AG04450 (cell line): ENCODE measurements at regions of chr12 and their contacts with region 1.

Region 1: GRCh38 chr12:7142056-7142644 is 12.0 kb downstream of the CLSTN3 start:
- DNase-seq: no peak
- H3K4me3 ChIP-seq: no peak overlapping the region
- H3K27ac ChIP-seq: no peak overlapping the region
- H3K27me3 ChIP-seq: no peaks in the 10 kb centered on the region
- CTCF ChIP-seq: peak; percentile 77

Region 2: GRCh38 chr12:7108796-7109571 is 33.2 kb before region 1 on chr12 and contains the start of gene C1RL:
- CTCF ChIA-PET with region 1: interaction called, 12 read pairs
- POLR2A ChIA-PET with region 1: no interaction called
- DNase-seq: no peak
- H3K4me3 ChIP-seq: peak within 1 kb of the TSS; percentile 82
- H3K27ac ChIP-seq: peak within 1 kb of the TSS; percentile 96
- H3K27me3 ChIP-seq: no peaks in the 10 kb centered on the region
- CTCF ChIP-seq: peak; percentile 97
- polyA plus RNA-seq, gene C1RL: 45.3 and 58.7 TPM in 2 replicates

Region 3: DNA sequence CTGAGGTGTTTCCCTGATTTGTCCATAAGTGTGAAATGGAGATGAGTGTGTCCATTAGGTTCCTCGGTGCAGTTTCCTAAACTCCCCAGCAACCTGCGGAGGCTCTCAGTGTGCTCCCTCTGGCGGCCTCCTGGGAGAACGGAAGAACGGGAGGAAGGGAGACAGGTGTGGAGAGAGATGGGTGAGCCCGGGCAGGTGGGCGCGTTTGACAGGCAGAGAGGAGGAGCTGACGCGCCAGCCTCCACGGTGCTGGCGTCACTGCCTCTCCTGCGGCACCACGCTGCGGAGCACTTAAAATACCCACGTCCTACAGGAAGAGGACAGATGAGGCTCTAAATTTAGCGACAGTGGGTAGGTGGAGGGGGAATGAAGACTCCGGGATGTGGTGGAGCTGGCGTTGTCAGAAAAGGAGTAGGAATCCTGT is 20.6 kb after region 1 on chr12:
- CTCF ChIA-PET with region 1: interaction called, 45 read pairs
- POLR2A ChIA-PET with region 1: no interaction called
- DNase-seq: no peak
- H3K4me3 ChIP-seq: no peak overlapping the region
- H3K27ac ChIP-seq: no peak overlapping the region
- H3K27me3 ChIP-seq: peaks cover 22% of the 10 kb centered on the region
- CTCF ChIP-seq: peak; percentile 54

Region 4: DNA sequence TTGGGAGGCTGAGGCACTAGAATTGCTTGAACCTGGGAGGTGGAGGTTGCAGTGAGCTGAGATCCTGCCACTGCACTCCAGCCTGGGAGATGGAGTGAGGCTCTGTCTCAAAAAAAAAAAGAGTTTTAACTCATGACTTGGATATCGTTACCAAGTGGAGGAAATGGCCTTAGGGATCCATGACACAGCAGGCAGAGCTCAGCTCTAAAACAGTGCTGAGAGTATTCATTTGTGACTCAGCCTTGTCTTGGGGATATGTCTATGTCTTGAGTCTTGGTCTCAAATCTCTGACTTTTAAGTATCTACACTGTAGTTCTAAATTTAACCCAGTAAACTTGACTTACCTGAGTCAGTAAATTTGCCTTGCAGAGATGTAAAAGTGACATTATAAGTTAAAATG is 38.5 kb after region 1 on chr12:
- CTCF ChIA-PET with region 1: interaction called, 18 read pairs
- POLR2A ChIA-PET with region 1: no interaction called
- DNase-seq: no peak
- H3K4me3 ChIP-seq: no peak overlapping the region
- H3K27ac ChIP-seq: no peak overlapping the region
- H3K27me3 ChIP-seq: no peaks in the 10 kb centered on the region
- CTCF ChIP-seq: no peak

Region 5: DNA sequence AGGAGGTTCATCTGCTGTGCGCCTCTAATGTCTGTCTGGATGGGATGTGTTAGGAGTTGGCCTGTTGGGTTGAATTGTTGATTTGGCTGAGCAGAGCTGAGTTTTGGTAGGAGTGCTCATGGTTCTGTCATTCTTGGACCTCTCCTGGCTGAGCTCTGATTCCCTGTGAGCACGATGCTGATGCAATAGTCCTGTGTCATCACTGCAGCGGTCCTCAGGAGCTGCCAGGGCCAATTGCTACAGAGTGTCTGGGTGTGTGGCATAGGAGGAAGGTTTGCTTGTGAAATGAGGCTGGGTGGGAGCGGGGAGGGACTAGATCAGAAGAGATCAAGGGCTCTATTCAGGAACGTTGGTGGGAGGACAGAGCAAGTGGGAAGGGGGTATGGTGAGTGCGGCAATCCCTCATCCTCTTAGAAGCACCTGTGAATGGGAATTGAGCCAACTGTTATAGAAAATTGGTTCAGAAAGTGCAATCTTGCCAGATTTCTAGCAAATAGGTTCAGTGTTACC is 68.5 kb after region 1 on chr12:
- CTCF ChIA-PET with region 1: no interaction called
- POLR2A ChIA-PET with region 1: no interaction called
- DNase-seq: no peak
- H3K4me3 ChIP-seq: no peak overlapping the region
- H3K27ac ChIP-seq: no peak overlapping the region
- H3K27me3 ChIP-seq: no peaks in the 10 kb centered on the region
- CTCF ChIP-seq: no peak

Region 6: DNA sequence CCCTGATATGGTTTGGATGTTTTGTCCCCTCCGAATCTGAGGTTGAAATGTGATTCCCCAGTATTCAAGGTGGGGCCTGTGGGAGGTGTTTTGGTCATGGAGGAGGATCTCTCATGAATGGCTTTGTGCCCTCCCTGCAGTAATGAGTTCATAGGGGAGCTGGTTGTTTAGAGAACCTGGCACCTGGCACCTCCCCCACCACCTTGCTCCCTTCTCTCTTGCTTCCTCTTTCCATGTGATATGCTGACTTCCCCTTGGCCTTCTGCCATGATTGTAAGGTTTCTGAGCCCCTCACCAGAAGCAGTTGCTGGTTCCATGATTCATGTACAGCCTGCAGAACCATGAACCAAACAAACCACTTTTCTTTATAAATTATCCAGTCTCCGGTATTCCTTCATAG is 269.2 kb after region 1 on chr12:
- CTCF ChIA-PET with region 1: no interaction called
- POLR2A ChIA-PET with region 1: no interaction called
- DNase-seq: no peak
- H3K4me3 ChIP-seq: no peak overlapping the region
- H3K27ac ChIP-seq: no peak overlapping the region
- H3K27me3 ChIP-seq: no peaks in the 10 kb centered on the region
- CTCF ChIP-seq: no peak

Region 7: DNA sequence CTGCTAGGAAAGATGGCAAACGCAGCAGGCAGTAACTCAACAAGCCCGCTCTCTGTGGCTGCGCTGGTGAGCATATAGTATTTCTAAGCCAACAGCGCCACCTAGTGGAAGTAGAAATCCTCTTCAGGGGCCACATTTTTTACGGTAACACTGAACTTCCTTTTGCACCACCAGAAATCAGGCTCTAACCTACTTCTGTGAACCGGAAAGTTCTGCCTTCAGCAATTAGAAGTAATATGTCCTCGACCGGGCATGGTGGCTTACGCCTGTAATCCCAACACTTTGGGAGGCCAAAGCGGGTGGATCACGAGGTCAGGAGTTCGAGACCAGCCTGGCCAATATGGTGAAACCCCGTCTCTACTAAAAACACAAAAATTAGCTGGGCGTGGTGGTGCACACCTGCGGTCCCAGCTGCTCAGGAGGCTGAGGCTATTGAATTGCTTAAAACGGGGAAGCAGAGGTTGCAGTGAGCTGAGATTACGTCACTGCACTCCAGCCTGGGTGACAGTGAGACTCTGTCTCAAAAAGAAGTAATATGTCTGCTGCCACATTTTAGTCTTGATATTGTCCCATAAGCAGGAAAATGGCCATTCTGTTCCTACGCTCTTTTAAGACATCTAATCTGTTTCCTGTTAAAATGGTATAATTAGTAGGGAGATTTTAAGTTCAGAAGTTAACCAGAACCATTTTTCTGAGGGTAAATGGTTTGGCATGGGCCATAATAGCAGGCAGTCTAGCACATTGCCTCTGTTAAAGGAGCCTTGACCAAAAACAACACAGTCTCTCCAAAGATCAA is 496.8 kb after region 1 on chr12:
- CTCF ChIA-PET with region 1: interaction called, 10 read pairs
- POLR2A ChIA-PET with region 1: no interaction called
- DNase-seq: peak; percentile 37
- H3K4me3 ChIP-seq: no peak overlapping the region
- H3K27ac ChIP-seq: no peak overlapping the region
- H3K27me3 ChIP-seq: peaks cover 4% of the 10 kb centered on the region
- CTCF ChIP-seq: peak; percentile 80